Ovary (tissue), 10 donors: ENCODE measurements at regions of chr1 and their contacts with region 1.

Region 1: GRCh38 chr1:228340686-228341449 is 65.8 kb downstream of the TRIM11 start:
- DNase-seq: peak; percentile 7 to 45 (median 24)
- H3K4me3 ChIP-seq: no peak overlapping the region
- H3K27ac ChIP-seq: no peak overlapping the region
- H3K4me1 ChIP-seq: no peaks in the 10 kb centered on the region
- H3K27me3 ChIP-seq: no peaks in the 10 kb centered on the region
- CTCF ChIP-seq: no peak
- EP300 ChIP-seq: no peak
- POLR2A ChIP-seq: no peak

Region 2: DNA sequence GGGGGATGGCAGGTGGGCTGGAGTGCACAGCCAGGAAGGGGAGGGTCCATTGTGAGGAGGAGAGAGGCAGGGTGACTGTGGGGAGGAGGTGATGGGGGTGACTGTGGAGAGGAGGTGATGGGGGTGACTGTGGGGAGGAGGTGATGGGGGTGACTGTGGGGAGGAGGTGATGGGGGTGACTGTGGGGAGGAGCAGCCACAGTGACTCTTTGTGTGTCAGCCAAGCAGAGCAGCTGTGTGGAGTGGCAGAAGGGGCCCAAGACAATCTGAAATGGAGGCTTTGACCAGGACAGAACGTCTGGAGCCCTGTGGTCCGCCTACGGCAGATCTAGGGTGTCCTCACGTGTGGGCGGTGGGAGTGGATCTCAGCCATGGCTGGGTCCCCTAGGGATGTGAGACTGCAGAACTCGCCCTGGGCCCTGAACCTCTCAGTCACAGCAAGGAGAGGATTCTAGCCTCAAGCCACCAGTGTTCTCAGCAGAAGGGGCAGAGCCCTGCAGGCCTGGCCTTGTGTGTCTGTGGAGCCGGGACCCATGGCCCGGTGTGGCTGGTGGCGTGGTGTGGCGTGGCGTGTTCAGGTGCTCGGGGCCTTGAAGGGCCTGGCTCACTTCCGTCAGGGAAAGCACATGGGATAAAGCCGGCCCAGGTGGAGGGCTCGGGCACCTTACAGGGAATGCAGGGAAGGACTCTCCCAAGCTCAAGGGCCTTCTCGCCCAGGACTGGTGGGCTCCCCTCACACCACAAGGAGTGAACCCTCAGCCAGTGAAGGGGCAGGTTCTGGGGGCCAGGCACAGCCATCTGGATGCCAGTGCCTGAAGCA is 51.4 kb before region 1 on chr1:
- intact Hi-C with region 1: loop called in 1 of 4 experiments (anchors 5 kb)
- DNase-seq: peak in 1 of 5 donors; percentile 13
- H3K4me3 ChIP-seq: no peak overlapping the region
- H3K27ac ChIP-seq: no peak overlapping the region
- H3K4me1 ChIP-seq: no peaks in the 10 kb centered on the region
- H3K27me3 ChIP-seq: no peaks in the 10 kb centered on the region
- CTCF ChIP-seq: no peak
- EP300 ChIP-seq: no peak
- POLR2A ChIP-seq: no peak